Caco-2 (cell line): ENCODE measurements at regions of chr11 and their contacts with region 1.

Region 1: GRCh38 chr11:77589521-77590193 is at the start of gene AQP11:
- DNase-seq: peak; percentile 98 to 99
- H3K4me3 ChIP-seq: peak within 1 kb of the TSS; percentile 79
- H3K4me3 Mint-ChIP-seq: peak within 1 kb of the TSS; percentile 97
- H3K27ac Mint-ChIP-seq: peak within 1 kb of the TSS; percentile 92
- H3K4me1 ChIP-seq: peaks cover 13% of the 10 kb centered on the region
- H3K4me1 Mint-ChIP-seq: peaks cover 34% of the 10 kb centered on the region
- H3K27me3 ChIP-seq: no peaks in the 10 kb centered on the region
- H3K27me3 Mint-ChIP-seq: no peaks in the 10 kb centered on the region
- CTCF ChIP-seq: no peak
- total RNA-seq, gene AQP11: 11.5 and 12.7 TPM in 2 replicates

Region 2: GRCh38 chr11:77479746-77480352 is 109.8 kb before region 1 on chr11:
- CTCF ChIA-PET with region 1: interaction called, 3 read pairs
- POLR2A ChIA-PET with region 1: interaction called, 10 read pairs
- intact Hi-C with region 1: no loop called
- DNase-seq: no peak
- H3K4me3 ChIP-seq: no peak overlapping the region
- H3K4me3 Mint-ChIP-seq: no peak overlapping the region
- H3K27ac Mint-ChIP-seq: no peak overlapping the region
- H3K4me1 ChIP-seq: peaks cover 4% of the 10 kb centered on the region; the same call in 1 of the 2 replicates
- H3K4me1 Mint-ChIP-seq: peaks cover 6% of the 10 kb centered on the region
- H3K27me3 ChIP-seq: no peaks in the 10 kb centered on the region
- H3K27me3 Mint-ChIP-seq: no peaks in the 10 kb centered on the region
- CTCF ChIP-seq: no peak

Region 3: GRCh38 chr11:77515483-77516090 is 74.1 kb before region 1 on chr11:
- CTCF ChIA-PET with region 1: no interaction called
- POLR2A ChIA-PET with region 1: no interaction called
- intact Hi-C with region 1: loop called (anchors 1 kb)
- DNase-seq: peak; percentile 83 to 85
- H3K4me3 ChIP-seq: no peak overlapping the region
- H3K4me3 Mint-ChIP-seq: peak overlapping the region; percentile 52
- H3K27ac Mint-ChIP-seq: peak overlapping the region; percentile 6
- H3K4me1 ChIP-seq: peaks cover 17% of the 10 kb centered on the region
- H3K4me1 Mint-ChIP-seq: peaks cover 22% of the 10 kb centered on the region
- H3K27me3 ChIP-seq: no peaks in the 10 kb centered on the region
- H3K27me3 Mint-ChIP-seq: no peaks in the 10 kb centered on the region
- CTCF ChIP-seq: no peak

Region 4: DNA sequence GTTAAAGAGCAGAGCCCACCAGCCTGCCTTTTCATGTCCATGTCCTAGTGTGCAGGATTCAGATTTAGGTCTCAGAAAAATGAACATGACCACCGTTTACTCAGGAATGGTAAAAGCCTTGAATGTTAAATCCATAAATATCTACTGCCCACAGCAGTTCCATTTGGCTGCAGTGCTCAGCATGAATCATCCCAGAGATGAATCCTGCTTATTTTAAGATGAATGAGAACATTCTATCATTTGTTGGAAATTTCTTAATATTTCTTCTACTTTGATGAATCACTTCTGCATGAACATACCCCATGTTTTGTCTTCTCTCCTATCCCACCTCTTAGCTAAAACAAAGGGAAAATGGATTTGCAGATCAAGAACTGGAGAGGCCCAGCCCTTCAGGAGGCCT is 47.4 kb before region 1 on chr11:
- CTCF ChIA-PET with region 1: no interaction called
- POLR2A ChIA-PET with region 1: no interaction called
- intact Hi-C with region 1: no loop called
- DNase-seq: no peak
- H3K4me3 ChIP-seq: no peak overlapping the region
- H3K4me3 Mint-ChIP-seq: no peak overlapping the region
- H3K27ac Mint-ChIP-seq: no peak overlapping the region
- H3K4me1 ChIP-seq: no peaks in the 10 kb centered on the region
- H3K4me1 Mint-ChIP-seq: no peaks in the 10 kb centered on the region
- H3K27me3 ChIP-seq: no peaks in the 10 kb centered on the region
- H3K27me3 Mint-ChIP-seq: no peaks in the 10 kb centered on the region
- CTCF ChIP-seq: no peak

Region 5: GRCh38 chr11:77559686-77560425 is 29.8 kb before region 1 on chr11:
- CTCF ChIA-PET with region 1: interaction called, 3 read pairs
- POLR2A ChIA-PET with region 1: no interaction called
- intact Hi-C with region 1: loop called (anchors 2 kb)
- DNase-seq: no peak
- H3K4me3 ChIP-seq: no peak overlapping the region
- H3K4me3 Mint-ChIP-seq: no peak overlapping the region
- H3K27ac Mint-ChIP-seq: no peak overlapping the region
- H3K4me1 ChIP-seq: peaks cover 42% of the 10 kb centered on the region
- H3K4me1 Mint-ChIP-seq: peaks cover 27% of the 10 kb centered on the region
- H3K27me3 ChIP-seq: no peaks in the 10 kb centered on the region
- H3K27me3 Mint-ChIP-seq: no peaks in the 10 kb centered on the region
- CTCF ChIP-seq: no peak

Region 6: DNA sequence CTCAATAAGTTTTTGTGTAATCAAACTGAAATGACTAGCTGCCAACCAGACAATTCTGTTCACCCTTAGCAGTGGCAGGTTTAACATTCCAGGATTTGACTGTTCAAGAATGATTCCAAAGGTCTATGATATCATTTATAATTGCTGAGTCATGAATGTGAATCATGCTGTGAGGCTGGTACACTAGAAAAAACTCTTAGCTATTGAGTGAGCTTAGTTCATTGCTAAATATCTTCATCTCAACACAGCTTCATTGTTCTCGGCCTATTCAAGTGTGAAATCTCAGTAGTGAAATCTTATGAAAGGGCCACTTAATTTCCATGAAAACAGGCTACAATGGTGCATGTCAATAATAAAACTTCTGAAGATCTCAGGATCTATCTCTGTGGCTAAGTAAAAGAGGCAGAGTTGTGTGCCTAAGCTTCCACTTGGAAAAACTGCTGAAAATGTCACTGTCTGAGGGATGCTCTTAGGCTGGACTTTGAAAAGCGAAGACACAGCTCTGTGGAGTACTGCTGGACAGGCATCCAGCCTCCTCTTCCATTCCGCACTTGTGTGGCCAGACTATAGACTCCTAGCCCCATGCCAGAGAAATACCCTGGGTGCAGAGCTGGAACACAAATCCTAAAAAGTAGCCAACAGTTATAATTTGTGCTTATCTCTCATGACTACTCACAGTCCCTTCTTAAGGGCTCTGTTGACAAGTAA is 12.9 kb after region 1 on chr11:
- CTCF ChIA-PET with region 1: interaction called, 3 read pairs
- POLR2A ChIA-PET with region 1: interaction called, 6 read pairs
- intact Hi-C with region 1: loop called (anchors 1 kb)
- DNase-seq: no peak
- H3K4me3 ChIP-seq: no peak overlapping the region
- H3K4me3 Mint-ChIP-seq: no peak overlapping the region
- H3K27ac Mint-ChIP-seq: no peak overlapping the region
- H3K4me1 ChIP-seq: peaks cover 20% of the 10 kb centered on the region
- H3K4me1 Mint-ChIP-seq: peaks cover 19% of the 10 kb centered on the region
- H3K27me3 ChIP-seq: no peaks in the 10 kb centered on the region
- H3K27me3 Mint-ChIP-seq: no peaks in the 10 kb centered on the region
- CTCF ChIP-seq: no peak

Region 7: DNA sequence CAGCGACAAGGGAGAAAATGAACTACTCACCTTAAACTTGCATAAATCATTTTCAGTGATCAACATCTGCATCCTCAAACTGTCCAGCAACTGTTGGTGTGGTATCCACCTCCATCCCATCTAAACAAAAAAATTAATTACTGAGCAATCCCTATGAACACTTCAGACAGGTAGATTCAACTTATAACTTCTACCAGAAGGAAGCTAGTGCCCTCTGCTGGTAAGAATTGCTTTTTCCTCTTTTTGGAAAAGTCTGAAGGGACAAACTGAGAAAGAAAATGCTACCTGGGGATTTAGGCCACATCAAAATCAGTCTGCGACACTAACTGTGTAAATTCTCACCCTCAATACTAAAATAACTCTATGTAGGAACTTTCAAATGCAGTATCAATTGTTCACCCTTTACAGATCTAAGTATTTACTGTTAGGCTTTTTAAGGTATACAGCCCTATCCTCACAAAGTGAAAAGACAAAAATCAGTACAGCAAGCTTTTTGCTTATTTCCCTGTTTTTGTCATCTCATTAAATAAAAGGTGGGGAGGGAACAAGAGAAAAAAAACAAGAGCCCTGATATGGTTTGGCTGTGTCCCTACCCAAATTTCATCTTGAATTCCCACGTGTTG is 30.0 kb after region 1 on chr11:
- CTCF ChIA-PET with region 1: interaction called, 5 read pairs
- POLR2A ChIA-PET with region 1: no interaction called
- intact Hi-C with region 1: loop called (anchors 2 kb)
- DNase-seq: peak in 1 of 2 experiments; percentile 82
- H3K4me3 ChIP-seq: no peak overlapping the region
- H3K4me3 Mint-ChIP-seq: no peak overlapping the region
- H3K27ac Mint-ChIP-seq: no peak overlapping the region
- H3K4me1 ChIP-seq: no peaks in the 10 kb centered on the region
- H3K4me1 Mint-ChIP-seq: no peaks in the 10 kb centered on the region
- H3K27me3 ChIP-seq: no peaks in the 10 kb centered on the region
- H3K27me3 Mint-ChIP-seq: no peaks in the 10 kb centered on the region
- CTCF ChIP-seq: peak; percentile 85 to 90

Region 8: DNA sequence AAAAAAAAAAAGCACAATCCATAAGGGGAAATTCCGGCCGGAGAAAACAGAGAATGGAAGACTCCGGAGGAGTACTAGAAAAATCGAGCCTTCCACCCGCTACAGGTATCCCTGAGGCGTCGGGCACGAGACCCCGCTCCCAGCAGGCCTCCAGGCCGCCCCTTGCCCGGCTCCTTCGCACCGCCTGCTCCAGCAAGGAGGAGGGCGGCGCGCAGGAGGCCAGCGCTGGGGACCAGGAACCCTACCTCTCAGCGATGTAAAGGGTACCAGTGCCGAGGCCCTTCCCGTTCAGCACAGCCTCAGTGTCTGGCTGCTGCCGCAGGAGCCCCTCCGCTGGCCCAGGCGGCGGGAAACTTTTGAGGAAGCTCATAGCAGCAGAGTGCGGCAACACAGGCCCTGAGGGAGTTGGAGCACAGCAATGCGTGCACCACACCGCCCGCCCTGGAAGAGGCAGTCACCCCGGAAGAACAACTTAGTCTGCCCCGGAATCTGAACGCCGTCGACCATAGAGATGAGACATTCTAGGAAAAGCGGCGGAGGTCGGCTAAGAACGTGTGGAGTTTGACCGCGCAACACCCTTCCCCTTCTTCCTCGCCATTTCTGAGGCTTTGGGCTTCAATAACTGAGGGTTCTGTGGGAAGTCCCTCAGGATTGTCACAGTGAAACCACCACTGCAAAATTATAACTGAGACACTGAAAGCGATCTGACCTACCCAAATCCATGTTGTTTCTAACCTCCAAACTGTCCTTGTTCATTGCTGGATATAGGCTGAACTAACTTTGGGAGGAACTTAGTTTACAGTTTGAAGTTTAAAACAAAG is 47.9 kb after region 1 on chr11 and contains the start of gene CLNS1A:
- CTCF ChIA-PET with region 1: no interaction called
- POLR2A ChIA-PET with region 1: no interaction called
- intact Hi-C with region 1: loop called (anchors 1 kb)
- DNase-seq: peak; percentile 95 to 96
- H3K4me3 ChIP-seq: peak within 1 kb of the TSS; percentile 80
- H3K4me3 Mint-ChIP-seq: peak within 1 kb of the TSS; percentile 88
- H3K27ac Mint-ChIP-seq: peak within 1 kb of the TSS; percentile 85
- H3K4me1 ChIP-seq: peaks cover 4% of the 10 kb centered on the region
- H3K4me1 Mint-ChIP-seq: peaks cover 15% of the 10 kb centered on the region
- H3K27me3 ChIP-seq: no peaks in the 10 kb centered on the region
- H3K27me3 Mint-ChIP-seq: no peaks in the 10 kb centered on the region
- CTCF ChIP-seq: peak in 1 of 2 experiments; percentile 8
- total RNA-seq, gene CLNS1A: 282 and 306 TPM in 2 replicates